Prostate gland (tissue), 2 donors: ENCODE measurements at regions of chr6 and their contacts with region 1.

Region 1: GRCh38 chr6:116352515-116353471 is 18.0 kb upstream of the DSE start:
- DNase-seq: no peak
- H3K4me3 ChIP-seq: no peak overlapping the region
- H3K27ac ChIP-seq: no peak overlapping the region
- H3K4me1 ChIP-seq: no peaks in the 10 kb centered on the region
- H3K27me3 ChIP-seq: no peaks in the 10 kb centered on the region
- CTCF ChIP-seq: no peak
- POLR2A ChIP-seq: no peak

Region 2: GRCh38 chr6:116268589-116269293 is 84.1 kb before region 1 on chr6:
- intact Hi-C with region 1: no loop called
- DNase-seq: no peak
- H3K4me3 ChIP-seq: no peak overlapping the region
- H3K27ac ChIP-seq: no peak overlapping the region
- H3K4me1 ChIP-seq: no peaks in the 10 kb centered on the region
- H3K27me3 ChIP-seq: no peaks in the 10 kb centered on the region
- CTCF ChIP-seq: peak; percentile 43 to 93 (median 70)
- POLR2A ChIP-seq: no peak

Region 3: DNA sequence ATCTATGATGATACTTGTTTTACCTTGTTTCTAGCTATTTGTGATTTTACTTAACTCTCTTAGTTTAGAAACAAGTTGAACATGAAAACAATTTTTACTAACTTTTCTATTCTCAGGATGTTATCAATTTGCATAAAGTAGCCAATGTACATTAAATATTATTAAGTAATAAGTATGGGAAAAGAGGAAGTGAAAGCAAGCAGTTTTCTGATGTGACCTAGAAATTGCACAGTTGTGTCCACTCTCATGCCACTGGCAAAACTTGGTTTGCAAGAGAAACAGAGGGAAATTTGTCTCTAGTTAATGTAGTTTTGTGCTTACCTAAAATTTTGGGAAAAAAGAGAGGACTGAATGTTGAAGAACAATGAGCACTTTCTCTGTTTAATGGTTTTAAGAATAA is 53.8 kb before region 1 on chr6:
- intact Hi-C with region 1: loop called (anchors 10 kb)
- DNase-seq: no peak
- H3K4me3 ChIP-seq: no peak overlapping the region
- H3K27ac ChIP-seq: no peak overlapping the region
- H3K4me1 ChIP-seq: no peaks in the 10 kb centered on the region
- H3K27me3 ChIP-seq: no peaks in the 10 kb centered on the region
- CTCF ChIP-seq: no peak
- POLR2A ChIP-seq: no peak

Region 4: DNA sequence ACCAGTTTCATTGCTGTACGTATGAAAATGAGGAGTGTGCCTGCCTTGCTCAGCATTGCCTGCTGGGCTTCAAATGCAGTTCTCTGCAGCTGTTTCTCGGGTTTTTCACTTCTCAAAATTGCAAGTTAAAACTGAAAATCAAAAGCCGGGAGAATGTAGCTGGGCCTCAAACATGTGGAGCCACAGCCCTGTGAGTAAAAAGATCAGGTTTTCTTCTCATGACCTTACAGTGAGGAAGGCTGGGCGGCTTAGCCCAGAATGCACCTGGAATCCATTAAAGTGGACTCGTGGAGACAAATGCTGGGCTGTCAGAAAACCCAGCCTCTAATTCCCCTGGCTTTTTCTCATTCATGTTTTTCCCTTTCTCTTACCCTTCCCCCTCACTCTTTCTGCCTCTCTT is 52.3 kb after region 1 on chr6:
- intact Hi-C with region 1: no loop called
- DNase-seq: no peak
- H3K4me3 ChIP-seq: no peak overlapping the region
- H3K27ac ChIP-seq: no peak overlapping the region
- H3K4me1 ChIP-seq: no peaks in the 10 kb centered on the region
- H3K27me3 ChIP-seq: no peaks in the 10 kb centered on the region
- CTCF ChIP-seq: no peak
- POLR2A ChIP-seq: no peak